AG04449 (cell line): ENCODE measurements at regions of chr16 and their contacts with region 1.

Region 1: GRCh38 chr16:1929578-1930337 is 11.5 kb upstream of the HS3ST6 start:
- DNase-seq: no peak
- H3K4me3 ChIP-seq: peak overlapping the region; percentile 65
- CTCF ChIP-seq: peak; percentile 85

Region 2: GRCh38 chr16:1812732-1813163 is 117.0 kb before region 1 on chr16:
- CTCF ChIA-PET with region 1: interaction called, 10 read pairs
- POLR2A ChIA-PET with region 1: no interaction called
- DNase-seq: no peak
- H3K4me3 ChIP-seq: no peak overlapping the region
- CTCF ChIP-seq: peak; percentile 44

Region 3: DNA sequence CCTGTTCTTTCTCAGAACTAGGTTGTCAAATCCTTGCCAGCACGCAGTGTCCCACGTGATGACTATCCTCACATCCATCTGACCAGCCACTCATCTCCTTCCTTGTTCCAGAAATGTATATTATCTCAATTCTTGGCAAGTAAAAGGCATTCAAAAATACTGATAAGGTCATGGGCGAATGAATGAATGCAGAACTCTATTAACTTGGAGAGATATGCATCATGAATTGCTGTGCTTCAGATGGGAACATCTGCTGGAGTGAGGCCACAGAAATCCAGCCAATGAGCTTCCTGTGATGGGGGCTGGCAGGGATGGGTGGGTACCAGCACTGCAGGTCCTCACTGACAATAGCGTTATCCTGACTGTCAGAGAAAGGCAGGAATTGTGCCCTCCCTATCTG is 83.8 kb before region 1 on chr16:
- CTCF ChIA-PET with region 1: interaction called, 14 read pairs
- POLR2A ChIA-PET with region 1: no interaction called
- DNase-seq: no peak
- H3K4me3 ChIP-seq: no peak overlapping the region
- CTCF ChIP-seq: no peak

Region 4: DNA sequence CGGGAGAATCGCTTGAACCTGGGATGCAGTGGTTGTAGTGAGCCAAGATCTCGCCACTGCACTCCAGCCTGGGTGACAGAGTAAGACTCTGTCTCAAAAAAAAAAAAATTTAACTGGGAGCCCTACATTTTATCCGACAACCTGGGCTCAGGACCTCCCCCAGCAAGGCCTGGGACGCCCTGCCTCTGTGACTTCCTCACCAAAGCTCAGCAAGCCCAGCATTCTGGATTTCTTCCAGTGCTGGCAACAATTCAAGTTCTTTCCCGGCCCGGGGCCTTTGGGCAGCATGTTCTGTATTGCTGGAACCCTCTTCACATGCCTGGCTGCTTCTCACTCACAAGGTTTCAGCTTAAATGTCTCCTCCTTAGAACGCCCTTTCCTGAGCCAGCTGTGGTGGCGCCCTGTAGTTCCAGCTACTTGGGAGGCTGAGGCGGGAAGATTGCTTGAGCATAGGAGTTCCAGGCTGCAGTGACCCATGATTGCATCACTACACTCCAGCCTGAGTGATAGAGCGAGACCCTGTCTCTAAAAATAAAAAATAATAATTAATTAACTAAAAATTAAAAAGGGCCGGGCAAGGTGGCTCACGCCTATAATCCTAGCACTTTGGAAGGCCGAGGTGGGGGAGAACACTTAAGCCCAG is 41.9 kb before region 1 on chr16:
- CTCF ChIA-PET with region 1: interaction called, 13 read pairs
- POLR2A ChIA-PET with region 1: no interaction called
- DNase-seq: no peak
- H3K4me3 ChIP-seq: no peak overlapping the region
- CTCF ChIP-seq: no peak

Region 5: GRCh38 chr16:1942810-1943726 is 13.3 kb after region 1 on chr16 and contains the start of gene MSRB1:
- CTCF ChIA-PET with region 1: interaction called, 80 read pairs
- POLR2A ChIA-PET with region 1: interaction called, 3 read pairs
- DNase-seq: peak; percentile 65
- H3K4me3 ChIP-seq: peak within 1 kb of the TSS; percentile 87
- CTCF ChIP-seq: no peak